CD14-positive monocyte (primary cell): ENCODE measurements at regions of chr1 and their contacts with region 1.

Region 1: DNA sequence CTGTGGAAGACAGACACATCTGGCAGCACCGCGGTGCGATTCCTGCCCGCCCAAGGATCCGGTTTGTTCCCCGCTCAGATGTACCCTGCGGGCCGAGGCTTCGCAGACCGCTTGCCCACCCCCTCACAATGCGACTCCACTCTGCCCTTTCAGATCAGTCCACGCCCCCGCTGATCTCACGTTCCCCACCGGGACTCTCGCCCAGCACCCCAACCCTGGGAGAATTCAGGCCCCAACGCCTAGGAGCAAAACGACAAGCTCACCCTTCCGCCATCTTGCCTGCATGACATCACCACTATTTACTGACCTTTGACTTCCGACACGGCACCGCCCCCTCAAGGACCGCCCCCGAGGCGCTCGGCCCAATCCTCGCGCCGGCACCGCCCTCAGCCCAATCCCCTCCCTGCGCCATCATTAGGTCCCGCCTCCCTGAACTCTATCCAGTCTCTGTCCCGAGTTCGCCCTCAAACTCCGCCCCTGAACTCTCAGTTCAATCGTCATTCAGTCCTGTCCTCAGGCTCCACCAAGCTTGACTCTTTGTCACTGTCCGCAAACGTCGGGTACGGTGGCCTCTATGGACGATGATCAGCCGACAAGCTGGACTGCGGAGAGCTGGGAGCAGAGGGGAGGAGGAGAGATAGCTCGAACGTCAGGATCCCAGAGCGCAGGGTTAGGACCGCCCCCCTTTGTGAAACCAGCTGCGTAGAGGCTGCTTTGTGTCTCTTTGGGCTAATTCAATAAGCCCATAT is at the start of gene BSDC1:
- DNase-seq: peak; percentile 98 to 99 (median 98)
- H3K4me3 ChIP-seq: peak within 1 kb of the TSS; percentile 84 to 94 (median 91)
- H3K4me3 Mint-ChIP-seq: peak within 1 kb of the TSS; percentile 98 to 100
- H3K27ac ChIP-seq: peak within 1 kb of the TSS; percentile 67 to 90
- H3K27ac Mint-ChIP-seq: peak within 1 kb of the TSS; percentile 99 to 100 (median 99)
- H3K4me1 ChIP-seq: peaks cover 24 to 32% of the 10 kb centered on the region in 2 donors
- H3K4me1 Mint-ChIP-seq: peaks cover 21% of the 10 kb centered on the region
- H3K27me3 ChIP-seq: no peaks in the 10 kb centered on the region
- H3K27me3 Mint-ChIP-seq: peaks cover 0 to 2% (median 0%) of the 10 kb centered on the region in 3 donors
- CTCF ChIP-seq: no peak
- polyA plus RNA-seq, gene BSDC1: 19.0 to 42.4 (median 23.7) TPM

Region 2: GRCh38 chr1:32107742-32108661 is 286.3 kb before region 1 on chr1 and contains the start of gene KPNA6:
- intact Hi-C with region 1: loop called in 1 of 2 experiments (anchors 5 kb)
- DNase-seq: peak; percentile 88 to 92 (median 91)
- H3K4me3 ChIP-seq: peak within 1 kb of the TSS; percentile 64 to 93 (median 87)
- H3K4me3 Mint-ChIP-seq: peak within 1 kb of the TSS; percentile 98 to 99
- H3K27ac ChIP-seq: peak within 1 kb of the TSS; percentile 89 to 90
- H3K27ac Mint-ChIP-seq: peak within 1 kb of the TSS; percentile 92 to 98 (median 98)
- H3K4me1 ChIP-seq: peaks cover 23 to 34% of the 10 kb centered on the region in 2 donors
- H3K4me1 Mint-ChIP-seq: peaks cover 44% of the 10 kb centered on the region
- H3K27me3 ChIP-seq: no peaks in the 10 kb centered on the region
- H3K27me3 Mint-ChIP-seq: peaks cover 0 to 3% (median 0%) of the 10 kb centered on the region in 3 donors
- CTCF ChIP-seq: no peak
- polyA plus RNA-seq, gene KPNA6: 11.0 to 26.7 (median 20.2) TPM

Region 3: DNA sequence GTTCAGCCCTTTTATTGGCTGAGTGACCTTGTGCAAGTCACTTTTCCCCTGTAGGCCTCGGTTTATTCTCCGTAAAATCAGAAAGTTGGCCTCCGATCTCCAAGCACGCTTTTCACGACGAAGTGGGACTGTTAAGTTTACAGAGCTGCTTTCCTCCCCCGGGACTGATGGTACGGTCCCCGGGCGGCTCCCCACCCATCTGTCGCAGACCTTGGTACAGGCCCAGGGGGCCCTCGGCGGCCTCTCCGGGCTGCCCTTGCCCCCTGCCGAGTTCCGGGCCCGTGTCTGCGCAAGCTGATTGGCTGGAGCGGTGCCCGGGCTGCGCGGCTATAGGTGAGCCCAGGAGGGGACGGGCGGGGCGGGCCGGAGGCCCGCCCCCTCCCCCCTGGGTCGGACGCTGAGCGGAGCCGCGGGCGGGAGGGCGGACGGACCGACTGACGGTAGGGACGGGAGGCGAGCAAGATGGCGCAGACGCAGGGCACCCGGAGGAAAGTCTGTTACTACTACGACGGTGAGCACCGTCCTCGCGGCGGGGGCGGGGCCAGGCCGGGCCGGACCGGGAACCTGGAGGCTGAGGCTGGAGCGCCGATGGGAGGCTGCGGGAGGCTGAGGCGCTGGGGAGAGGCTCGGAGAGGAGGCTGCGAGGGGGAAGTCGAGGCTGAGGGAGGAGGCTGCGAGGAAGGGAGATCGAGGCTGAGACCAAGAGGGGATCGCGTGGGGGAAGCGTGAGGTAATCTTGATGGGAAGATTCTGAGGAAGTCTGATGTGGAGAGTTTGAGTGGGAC is 102.4 kb before region 1 on chr1 and contains the start of gene HDAC1:
- intact Hi-C with region 1: loop called in 1 of 2 experiments (anchors 1 kb)
- DNase-seq: peak; percentile 95 to 97 (median 96)
- H3K4me3 ChIP-seq: peak within 1 kb of the TSS; percentile 79 to 96 (median 91)
- H3K4me3 Mint-ChIP-seq: peak within 1 kb of the TSS; percentile 100
- H3K27ac ChIP-seq: peak within 1 kb of the TSS; percentile 52 to 88
- H3K27ac Mint-ChIP-seq: peak within 1 kb of the TSS; percentile 91 to 97 (median 96)
- H3K4me1 ChIP-seq: peaks cover 18 to 21% of the 10 kb centered on the region in 2 donors
- H3K4me1 Mint-ChIP-seq: peaks cover 40% of the 10 kb centered on the region
- H3K27me3 ChIP-seq: no peaks in the 10 kb centered on the region
- H3K27me3 Mint-ChIP-seq: peaks cover 0 to 5% (median 4%) of the 10 kb centered on the region in 3 donors
- CTCF ChIP-seq: no peak
- polyA plus RNA-seq, gene HDAC1: 73.8 to 95.0 (median 88.7) TPM

Region 4: DNA sequence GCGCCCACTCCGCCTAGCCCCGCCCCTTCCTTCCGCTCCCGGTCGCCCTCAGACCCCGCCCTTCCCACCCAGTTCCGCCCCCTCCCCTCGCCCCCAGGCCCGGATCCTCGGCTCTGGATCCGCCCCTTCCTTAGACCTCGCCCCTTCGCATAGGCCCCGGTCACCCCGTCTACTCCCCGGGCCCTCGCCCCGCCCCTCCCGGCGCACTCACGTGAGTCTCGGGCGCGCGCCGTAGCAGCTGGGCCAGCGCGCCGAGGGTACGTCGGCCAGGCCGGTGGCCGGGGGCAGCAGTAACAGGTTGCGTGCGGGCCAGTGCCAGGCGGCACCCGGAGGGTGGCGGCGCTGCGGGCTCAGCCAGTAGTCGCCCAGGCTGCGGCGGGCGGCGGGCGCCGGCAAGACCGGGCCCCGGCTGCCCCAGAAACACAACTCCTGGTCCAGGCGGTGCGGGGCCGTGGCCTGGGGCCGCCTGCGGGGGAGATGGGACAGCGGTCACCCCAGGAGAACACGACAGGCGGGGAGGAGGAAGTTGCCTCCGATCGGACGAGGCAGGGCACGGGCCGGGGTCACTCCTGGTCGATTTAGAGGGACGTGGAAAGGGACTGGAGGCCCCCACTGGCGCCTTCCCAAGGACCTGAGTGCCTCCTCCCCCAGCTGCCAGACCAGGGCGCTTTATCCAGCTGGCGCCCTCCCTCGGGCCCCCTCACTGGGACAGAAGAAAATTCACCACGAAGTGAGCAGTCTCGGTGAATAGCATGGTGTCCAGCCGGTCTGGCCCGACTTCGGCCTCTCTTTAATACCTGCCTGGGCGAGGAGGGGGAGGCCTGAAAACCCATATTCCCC is 42.7 kb before region 1 on chr1:
- intact Hi-C with region 1: loop called in 1 of 2 experiments (anchors 5 kb)
- DNase-seq: peak; percentile 89 to 95 (median 92)
- H3K4me3 ChIP-seq: peak overlapping the region; percentile 36 to 74 (median 41)
- H3K4me3 Mint-ChIP-seq: peak overlapping the region; percentile 79 to 86
- H3K27ac ChIP-seq: peak overlapping the region; percentile 63 to 88
- H3K27ac Mint-ChIP-seq: peak overlapping the region; percentile 61 to 97 (median 91)
- H3K4me1 ChIP-seq: peaks cover 58 to 65% of the 10 kb centered on the region in 2 donors
- H3K4me1 Mint-ChIP-seq: peaks cover 62% of the 10 kb centered on the region
- H3K27me3 ChIP-seq: peaks cover 3 to 15% of the 10 kb centered on the region in 2 donors
- H3K27me3 Mint-ChIP-seq: peaks cover 30 to 34% (median 31%) of the 10 kb centered on the region in 3 donors
- CTCF ChIP-seq: peak; percentile 4

Region 5: DNA sequence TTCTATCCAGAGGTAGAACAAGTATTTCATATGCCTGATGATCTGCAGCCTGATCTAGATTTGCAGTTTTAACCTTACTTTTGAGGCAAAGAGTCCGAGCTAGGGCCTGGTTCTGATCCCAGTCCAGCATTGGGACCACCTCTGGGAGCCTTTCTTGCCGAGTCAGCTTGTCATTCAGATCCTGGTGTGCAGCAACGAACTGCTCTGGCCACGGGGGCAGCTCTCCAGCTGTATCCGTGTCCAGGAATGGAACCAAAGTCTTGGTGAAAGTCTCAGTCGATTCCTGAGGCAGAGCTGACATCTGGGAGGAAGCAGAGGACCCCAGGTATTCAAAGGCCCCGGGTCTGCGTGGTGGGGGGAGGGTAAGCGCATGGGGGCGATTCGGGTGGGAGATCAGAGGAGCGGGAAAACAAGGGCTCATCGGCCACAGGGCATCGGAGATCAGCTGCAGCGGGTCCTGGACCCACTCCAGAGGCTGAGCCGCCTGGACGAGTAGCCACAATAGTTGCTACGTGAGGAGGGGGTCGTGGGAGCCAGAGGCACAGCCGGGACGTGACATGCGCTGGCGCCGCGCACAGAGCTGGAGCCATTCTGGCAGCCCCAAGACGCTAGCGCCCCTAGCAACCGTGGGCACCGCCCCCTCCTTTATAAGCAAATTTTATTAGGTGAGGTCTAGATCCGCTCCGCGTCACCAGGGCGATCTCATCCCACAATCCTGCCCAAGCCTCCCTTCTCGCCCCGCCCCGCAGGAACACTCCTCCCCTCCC is 32.4 kb after region 1 on chr1:
- intact Hi-C with region 1: no loop called
- DNase-seq: no peak
- H3K4me3 ChIP-seq: no peak overlapping the region
- H3K4me3 Mint-ChIP-seq: peak overlapping the region; percentile 46 to 55
- H3K27ac ChIP-seq: no peak overlapping the region
- H3K27ac Mint-ChIP-seq: peak overlapping the region in 2 of 7 donors; percentile 17 to 64
- H3K4me1 ChIP-seq: no peaks in the 10 kb centered on the region
- H3K4me1 Mint-ChIP-seq: peaks cover 3% of the 10 kb centered on the region
- H3K27me3 ChIP-seq: peaks cover 21 to 25% of the 10 kb centered on the region in 2 donors
- H3K27me3 Mint-ChIP-seq: peaks cover 22 to 57% (median 52%) of the 10 kb centered on the region in 3 donors
- CTCF ChIP-seq: no peak